CD4-positive, alpha-beta T cell (primary cell): ENCODE measurements at regions of chr1 and their contacts with region 1.

Region 1: GRCh38 chr1:243264717-243265116 is 8.9 kb downstream of the SDCCAG8 start:
- DNase-seq: peak in 1 of 14 experiments; percentile 25
- ATAC-seq: no peak
- H3K4me3 ChIP-seq: no peak overlapping the region
- H3K4me3 Mint-ChIP-seq: no peak overlapping the region
- H3K27ac ChIP-seq: no peak overlapping the region
- H3K27ac Mint-ChIP-seq: no peak overlapping the region
- H3K4me1 ChIP-seq: no peaks in the 10 kb centered on the region
- H3K4me1 Mint-ChIP-seq: peaks cover 46% of the 10 kb centered on the region
- H3K27me3 ChIP-seq: no peaks in the 10 kb centered on the region
- H3K27me3 Mint-ChIP-seq: no peaks in the 10 kb centered on the region
- CTCF ChIP-seq: no peak

Region 2: DNA sequence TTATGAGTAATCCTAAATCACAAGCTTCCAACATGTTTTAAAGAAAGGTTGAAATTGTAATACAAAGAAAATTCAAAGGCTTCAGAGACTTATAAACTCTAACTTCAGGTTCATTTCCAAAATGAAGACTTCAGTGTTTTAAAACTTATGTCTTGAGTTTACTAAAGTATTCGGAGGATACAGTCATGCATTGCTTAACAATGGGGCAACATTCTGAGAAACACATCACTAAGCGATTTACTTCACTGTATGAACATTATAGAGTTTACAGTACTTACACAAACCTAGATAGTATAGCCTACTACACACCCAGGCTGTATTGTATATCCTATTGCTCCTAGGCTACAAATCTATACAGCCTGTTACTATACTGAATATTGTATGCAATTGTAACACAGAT is 48.0 kb before region 1 on chr1:
- CTCF ChIA-PET with region 1: no interaction called
- POLR2A ChIA-PET with region 1: no interaction called
- intact Hi-C with region 1: no loop called
- DNase-seq: no peak
- ATAC-seq: no peak
- H3K4me3 ChIP-seq: no peak overlapping the region
- H3K4me3 Mint-ChIP-seq: no peak overlapping the region
- H3K27ac ChIP-seq: no peak overlapping the region
- H3K27ac Mint-ChIP-seq: no peak overlapping the region
- H3K4me1 ChIP-seq: no peaks in the 10 kb centered on the region
- H3K4me1 Mint-ChIP-seq: peaks cover 4% of the 10 kb centered on the region
- H3K27me3 ChIP-seq: no peaks in the 10 kb centered on the region
- H3K27me3 Mint-ChIP-seq: no peaks in the 10 kb centered on the region
- CTCF ChIP-seq: no peak

Region 3: DNA sequence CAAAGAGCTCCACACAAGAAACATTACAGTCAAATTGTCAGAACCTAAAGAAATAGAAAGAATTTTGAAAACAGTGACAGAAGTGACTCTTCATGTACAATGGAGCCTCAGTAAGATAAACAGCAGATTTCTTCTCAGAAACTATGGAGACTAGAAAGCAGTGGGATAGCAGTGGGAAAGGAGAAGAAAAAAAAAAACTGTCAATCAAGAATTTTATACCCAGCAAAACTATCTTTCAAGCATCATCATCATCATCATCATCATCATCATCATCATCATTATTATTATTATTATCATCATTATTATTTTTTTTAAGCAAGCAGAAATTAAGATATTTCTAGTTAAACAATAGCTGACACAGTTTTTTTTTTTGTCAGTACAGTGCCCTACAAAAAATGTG is 33.8 kb before region 1 on chr1:
- CTCF ChIA-PET with region 1: no interaction called
- POLR2A ChIA-PET with region 1: no interaction called
- intact Hi-C with region 1: loop called in 1 of 2 experiments (anchors 5 kb)
- DNase-seq: peak in 1 of 14 experiments; percentile 30
- ATAC-seq: peak; percentile 57
- H3K4me3 ChIP-seq: no peak overlapping the region
- H3K4me3 Mint-ChIP-seq: no peak overlapping the region
- H3K27ac ChIP-seq: no peak overlapping the region
- H3K27ac Mint-ChIP-seq: no peak overlapping the region
- H3K4me1 ChIP-seq: no peaks in the 10 kb centered on the region
- H3K4me1 Mint-ChIP-seq: peaks cover 26% of the 10 kb centered on the region
- H3K27me3 ChIP-seq: no peaks in the 10 kb centered on the region
- H3K27me3 Mint-ChIP-seq: no peaks in the 10 kb centered on the region
- CTCF ChIP-seq: no peak

Region 4: GRCh38 chr1:243301059-243301458 is 36.3 kb after region 1 on chr1:
- CTCF ChIA-PET with region 1: no interaction called
- POLR2A ChIA-PET with region 1: no interaction called
- intact Hi-C with region 1: no loop called
- DNase-seq: no peak
- ATAC-seq: no peak
- H3K4me3 ChIP-seq: no peak overlapping the region
- H3K4me3 Mint-ChIP-seq: no peak overlapping the region
- H3K27ac ChIP-seq: no peak overlapping the region
- H3K27ac Mint-ChIP-seq: no peak overlapping the region
- H3K4me1 ChIP-seq: no peaks in the 10 kb centered on the region
- H3K4me1 Mint-ChIP-seq: no peaks in the 10 kb centered on the region
- H3K27me3 ChIP-seq: no peaks in the 10 kb centered on the region
- H3K27me3 Mint-ChIP-seq: no peaks in the 10 kb centered on the region
- CTCF ChIP-seq: no peak